Activated CD4-positive, alpha-beta T cell treated with anti-CD3 and anti-CD28 coated beads for 36 hours (primary cell): ENCODE measurements at regions of chr7 and their contacts with region 1.

Region 1: DNA sequence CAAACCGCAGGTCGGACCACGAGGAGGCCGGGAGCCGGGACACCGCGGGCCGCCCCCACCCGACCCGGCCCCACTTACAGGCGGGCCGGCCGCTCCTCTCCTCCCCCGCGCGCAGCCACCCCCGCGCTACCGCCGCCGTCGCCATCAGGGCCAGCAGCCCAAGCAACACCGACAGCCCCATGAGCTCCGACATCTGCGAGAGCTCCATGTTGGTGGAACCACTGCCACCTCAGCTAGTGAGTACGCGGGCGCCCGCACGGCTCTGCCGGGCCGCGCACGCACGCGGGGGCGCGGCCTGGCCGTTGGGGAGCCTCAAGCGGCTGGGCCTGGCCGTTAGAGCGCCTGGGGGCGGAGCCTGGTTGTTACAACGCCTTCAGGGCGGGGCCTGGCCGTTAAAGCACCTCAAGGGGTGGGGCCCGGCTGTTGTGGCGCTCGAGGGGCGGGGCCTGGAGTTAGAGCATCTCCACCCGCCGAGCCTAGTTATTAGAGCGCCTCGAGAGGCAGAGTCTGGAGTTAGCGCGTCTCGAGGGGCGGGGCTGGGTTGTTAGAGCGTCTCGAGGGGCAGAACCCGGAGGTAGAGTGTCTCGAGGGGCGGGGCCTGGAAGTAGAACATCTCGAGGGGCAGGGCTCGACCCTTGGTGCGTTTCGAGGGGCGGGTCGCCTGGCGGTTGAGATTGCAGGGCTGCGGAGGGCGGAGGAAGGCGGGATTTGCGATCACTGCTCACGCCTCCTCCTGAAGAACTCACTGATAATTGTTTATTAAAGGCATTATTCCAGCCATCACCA is at the start of gene TBL2:
- DNase-seq: peak; percentile 100
- ATAC-seq: peak; percentile 92
- H3K4me3 Mint-ChIP-seq: peak within 1 kb of the TSS; percentile 98
- H3K27ac Mint-ChIP-seq: peak within 1 kb of the TSS; percentile 98
- H3K4me1 Mint-ChIP-seq: peaks cover 26% of the 10 kb centered on the region
- H3K27me3 Mint-ChIP-seq: no peaks in the 10 kb centered on the region
- total RNA-seq, gene TBL2: 30.6 to 34.7 TPM

Region 2: DNA sequence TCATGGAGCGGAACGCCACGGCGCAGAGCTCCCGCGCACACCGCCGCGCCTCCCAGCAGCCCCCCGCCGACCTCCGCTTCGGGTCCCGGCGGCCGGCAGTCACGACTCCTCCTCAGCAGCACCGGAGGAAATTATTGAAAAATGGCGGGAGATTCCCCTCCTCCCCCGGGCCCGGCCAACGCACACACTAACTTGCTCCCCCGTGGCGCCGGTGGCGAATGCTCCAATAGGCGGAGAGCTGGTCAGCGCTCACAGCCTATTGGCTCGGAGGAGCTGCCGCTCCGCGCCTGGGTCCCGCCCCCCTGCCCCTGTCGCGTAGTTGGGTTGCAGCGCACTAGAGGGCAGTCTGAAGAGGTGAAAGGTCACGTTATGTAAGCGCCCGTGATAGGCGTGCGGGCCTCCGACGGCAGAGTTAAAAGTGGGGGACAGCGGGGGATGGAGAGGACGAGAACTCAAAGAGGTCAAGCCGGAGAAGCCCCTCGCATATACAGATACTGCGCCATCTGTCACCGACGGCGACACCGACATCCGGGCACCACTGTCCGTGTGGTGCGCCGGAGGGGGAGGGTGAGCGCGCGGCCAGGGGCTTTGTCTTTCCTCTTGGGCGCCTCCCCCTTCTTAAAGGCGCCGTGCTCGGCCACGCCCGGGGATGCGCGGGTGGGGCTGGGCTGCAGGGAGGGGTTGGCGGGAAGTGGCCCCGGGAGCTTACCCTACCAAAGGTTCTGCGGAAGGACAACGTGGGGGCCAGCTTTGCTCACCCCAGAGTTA is 56.2 kb before region 1 on chr7 and contains the start of gene BAZ1B:
- CTCF ChIA-PET with region 1: no interaction called
- POLR2A ChIA-PET with region 1: interaction called, 6 read pairs
- intact Hi-C with region 1: loop called (anchors 1 kb)
- DNase-seq: peak; percentile 99
- ATAC-seq: peak; percentile 95
- H3K4me3 Mint-ChIP-seq: peak within 1 kb of the TSS; percentile 99
- H3K27ac Mint-ChIP-seq: peak within 1 kb of the TSS; percentile 98
- H3K4me1 Mint-ChIP-seq: peaks cover 53% of the 10 kb centered on the region
- H3K27me3 Mint-ChIP-seq: no peaks in the 10 kb centered on the region
- total RNA-seq, gene BAZ1B: 90.2 to 98.6 TPM

Region 3: GRCh38 chr7:73623798-73624668 is 45.5 kb after region 1 on chr7 and contains the start of gene MLXIPL:
- CTCF ChIA-PET with region 1: no interaction called
- POLR2A ChIA-PET with region 1: no interaction called
- intact Hi-C with region 1: loop called in 1 of 2 experiments (anchors 1 kb)
- DNase-seq: peak; percentile 85
- ATAC-seq: peak; percentile 95
- H3K4me3 Mint-ChIP-seq: no peak within 1 kb of the TSS
- H3K27ac Mint-ChIP-seq: no peak within 1 kb of the TSS
- H3K4me1 Mint-ChIP-seq: peaks cover 8% of the 10 kb centered on the region
- H3K27me3 Mint-ChIP-seq: peaks cover 43% of the 10 kb centered on the region
- total RNA-seq, gene MLXIPL: not detected

Region 4: GRCh38 chr7:73683056-73683964 is 104.8 kb after region 1 on chr7 and contains the starts of genes BUD23 and DNAJC30:
- CTCF ChIA-PET with region 1: no interaction called
- POLR2A ChIA-PET with region 1: no interaction called
- intact Hi-C with region 1: loop called in 1 of 2 experiments (anchors 1 kb)
- DNase-seq: peak; percentile 99
- ATAC-seq: peak; percentile 98
- H3K4me3 Mint-ChIP-seq: peak within 1 kb of the TSS; percentile 89
- H3K27ac Mint-ChIP-seq: peak within 1 kb of the TSS; percentile 96
- H3K4me1 Mint-ChIP-seq: peaks cover 41% of the 10 kb centered on the region
- H3K27me3 Mint-ChIP-seq: no peaks in the 10 kb centered on the region
- total RNA-seq, gene BUD23: 71.4 to 95.5 TPM
- total RNA-seq, gene DNAJC30: 6.9 to 7.8 TPM

Region 5: DNA sequence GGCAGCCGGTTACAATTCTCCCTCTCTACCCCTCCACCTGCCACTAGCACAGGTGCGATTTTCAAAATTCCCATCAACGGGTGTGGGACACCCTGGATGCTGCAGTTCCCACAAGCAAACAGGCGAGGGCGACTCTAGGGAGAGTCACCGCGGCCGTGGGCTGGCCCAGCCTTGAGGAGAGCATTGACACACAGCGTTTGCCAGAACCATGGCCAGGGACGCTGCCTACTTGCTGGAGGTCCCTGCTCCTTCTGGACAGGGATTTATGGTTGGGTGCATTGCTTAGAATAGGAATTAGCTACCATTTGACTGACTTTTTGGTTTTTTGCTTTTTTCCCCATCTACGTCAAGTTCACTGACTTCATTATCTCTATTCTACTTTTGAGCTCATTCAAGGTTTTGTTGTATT is 233.2 kb after region 1 on chr7:
- CTCF ChIA-PET with region 1: no interaction called
- POLR2A ChIA-PET with region 1: no interaction called
- intact Hi-C with region 1: no loop called
- DNase-seq: peak; percentile 79
- ATAC-seq: peak; percentile 86
- H3K4me3 Mint-ChIP-seq: no peak overlapping the region
- H3K27ac Mint-ChIP-seq: no peak overlapping the region
- H3K4me1 Mint-ChIP-seq: no peaks in the 10 kb centered on the region
- H3K27me3 Mint-ChIP-seq: peaks cover 7% of the 10 kb centered on the region

Region 6: DNA sequence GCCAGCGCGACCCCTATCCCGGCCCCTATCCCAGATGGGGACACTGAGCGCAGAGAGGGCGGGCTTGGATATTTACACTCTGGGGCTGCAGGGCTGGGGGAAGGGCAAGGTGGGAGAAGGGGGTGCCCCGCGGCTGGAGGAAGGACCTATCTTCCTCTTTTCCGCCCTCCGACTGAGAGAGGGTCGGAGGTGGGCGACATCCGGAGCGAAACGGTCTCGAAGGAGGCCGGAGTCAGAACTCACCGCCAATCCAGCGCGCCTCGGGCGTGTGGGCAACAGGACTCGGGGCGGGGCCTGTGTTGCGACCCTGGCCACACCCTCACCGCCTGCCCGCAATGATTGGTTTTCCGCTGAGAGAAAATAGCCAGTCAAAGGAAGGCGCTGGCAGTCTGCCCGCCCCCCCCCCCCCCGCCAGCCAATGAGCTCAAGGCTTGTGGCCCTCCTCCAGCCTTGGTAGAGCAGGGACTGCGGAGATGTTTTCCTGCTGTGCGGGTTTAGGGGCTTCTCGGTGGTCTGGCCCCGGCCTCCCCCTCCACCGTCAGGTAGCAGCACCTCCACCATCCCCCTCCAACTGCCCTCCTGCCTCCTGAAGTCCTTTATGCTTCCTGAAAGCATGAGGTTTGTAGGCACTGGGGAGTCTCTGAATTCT is 263.8 kb after region 1 on chr7 and contains the start of gene METTL27:
- CTCF ChIA-PET with region 1: no interaction called
- POLR2A ChIA-PET with region 1: no interaction called
- intact Hi-C with region 1: loop called in 1 of 2 experiments (anchors 1 kb)
- DNase-seq: peak; percentile 96
- ATAC-seq: peak; percentile 100
- H3K4me3 Mint-ChIP-seq: peak within 1 kb of the TSS; percentile 75
- H3K27ac Mint-ChIP-seq: peak within 1 kb of the TSS; percentile 69
- H3K4me1 Mint-ChIP-seq: peaks cover 7% of the 10 kb centered on the region
- H3K27me3 Mint-ChIP-seq: no peaks in the 10 kb centered on the region
- total RNA-seq, gene METTL27: 2.1 to 2.2 TPM

Region 7: GRCh38 chr7:74083117-74083876 is 504.8 kb after region 1 on chr7 and contains the start of gene LIMK1:
- CTCF ChIA-PET with region 1: no interaction called
- POLR2A ChIA-PET with region 1: no interaction called
- intact Hi-C with region 1: loop called in 1 of 2 experiments (anchors 2 kb)
- DNase-seq: peak; percentile 90
- ATAC-seq: peak; percentile 89
- H3K4me3 Mint-ChIP-seq: peak within 1 kb of the TSS; percentile 79
- H3K27ac Mint-ChIP-seq: peak within 1 kb of the TSS; percentile 77
- H3K4me1 Mint-ChIP-seq: peaks cover 5% of the 10 kb centered on the region
- H3K27me3 Mint-ChIP-seq: no peaks in the 10 kb centered on the region
- total RNA-seq, gene LIMK1: 12.5 to 14.8 TPM